ENCODE measurements at regions of chr9 and their contacts with region 1.

Region 1: DNA sequence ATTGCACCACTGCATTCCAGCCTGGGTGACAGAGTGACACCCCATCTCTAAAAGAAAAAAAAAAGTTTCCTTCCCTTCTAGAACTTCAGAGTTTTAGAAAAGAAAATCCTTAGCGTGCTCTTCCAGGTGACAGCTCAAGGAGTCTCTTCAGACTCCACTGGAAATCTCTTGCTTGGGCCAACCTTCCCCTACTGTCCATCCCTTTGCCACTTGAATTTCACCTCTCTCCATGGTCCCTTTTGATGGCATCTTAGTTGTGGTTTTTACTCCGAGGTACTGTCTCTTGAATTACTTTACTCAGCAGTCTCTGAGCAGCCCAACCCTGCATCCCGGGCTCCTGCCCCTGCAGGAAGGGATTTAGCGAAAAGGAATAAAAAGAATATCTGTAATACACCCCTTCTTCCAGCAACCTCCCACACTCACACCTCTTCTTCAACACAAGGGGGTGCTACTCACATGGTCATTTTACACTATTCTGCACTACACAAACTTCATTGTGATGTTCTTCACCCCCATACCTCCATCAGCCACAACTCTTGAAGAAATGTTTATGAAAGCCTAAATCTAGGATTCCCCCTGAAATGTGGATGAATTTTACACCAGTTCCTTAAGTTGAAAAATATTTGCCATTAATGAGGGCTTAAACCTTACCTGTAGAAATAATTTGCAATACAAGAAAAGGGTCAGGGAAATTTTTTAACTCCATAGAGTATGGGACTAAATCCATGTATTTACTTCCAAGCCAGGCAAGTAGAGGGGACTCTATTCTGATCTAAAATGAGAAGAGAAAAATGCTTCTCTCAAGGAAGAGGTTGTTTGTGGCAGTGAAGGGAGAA is 25.9 kb downstream of the TPD52L3 start:
- DNase-seq: no peak
- H3K4me3 ChIP-seq: no peak overlapping the region
- H3K27ac ChIP-seq: no peak overlapping the region
- H3K4me1 ChIP-seq: no peaks in the 10 kb centered on the region
- H3K27me3 ChIP-seq: no peaks in the 10 kb centered on the region
- CTCF ChIP-seq: peak; percentile 52 to 75 (median 63)

Region 2: GRCh38 chr9:6383551-6384225 is 29.6 kb after region 1 on chr9:
- intact Hi-C with region 1: loop called (anchors 2 kb)
- DNase-seq: peak in 1 of 2 donors; percentile 65
- H3K4me3 ChIP-seq: no peak overlapping the region
- H3K27ac ChIP-seq: peak overlapping the region; percentile 73 to 74
- H3K4me1 ChIP-seq: peaks cover 4 to 5% of the 10 kb centered on the region in 2 donors
- H3K27me3 ChIP-seq: no peaks in the 10 kb centered on the region
- CTCF ChIP-seq: no peak

Region 3: GRCh38 chr9:6405371-6405770 is 51.3 kb after region 1 on chr9:
- intact Hi-C with region 1: no loop called
- DNase-seq: no peak
- H3K4me3 ChIP-seq: no peak overlapping the region
- H3K27ac ChIP-seq: no peak overlapping the region
- H3K4me1 ChIP-seq: no peaks in the 10 kb centered on the region
- H3K27me3 ChIP-seq: no peaks in the 10 kb centered on the region
- CTCF ChIP-seq: no peak

Region 4: GRCh38 chr9:6498982-6499381 is 144.9 kb after region 1 on chr9:
- intact Hi-C with region 1: loop called (anchors 10 kb)
- DNase-seq: no peak
- H3K4me3 ChIP-seq: no peak overlapping the region
- H3K27ac ChIP-seq: no peak overlapping the region
- H3K4me1 ChIP-seq: no peaks in the 10 kb centered on the region
- H3K27me3 ChIP-seq: no peaks in the 10 kb centered on the region
- CTCF ChIP-seq: no peak

Region 5: DNA sequence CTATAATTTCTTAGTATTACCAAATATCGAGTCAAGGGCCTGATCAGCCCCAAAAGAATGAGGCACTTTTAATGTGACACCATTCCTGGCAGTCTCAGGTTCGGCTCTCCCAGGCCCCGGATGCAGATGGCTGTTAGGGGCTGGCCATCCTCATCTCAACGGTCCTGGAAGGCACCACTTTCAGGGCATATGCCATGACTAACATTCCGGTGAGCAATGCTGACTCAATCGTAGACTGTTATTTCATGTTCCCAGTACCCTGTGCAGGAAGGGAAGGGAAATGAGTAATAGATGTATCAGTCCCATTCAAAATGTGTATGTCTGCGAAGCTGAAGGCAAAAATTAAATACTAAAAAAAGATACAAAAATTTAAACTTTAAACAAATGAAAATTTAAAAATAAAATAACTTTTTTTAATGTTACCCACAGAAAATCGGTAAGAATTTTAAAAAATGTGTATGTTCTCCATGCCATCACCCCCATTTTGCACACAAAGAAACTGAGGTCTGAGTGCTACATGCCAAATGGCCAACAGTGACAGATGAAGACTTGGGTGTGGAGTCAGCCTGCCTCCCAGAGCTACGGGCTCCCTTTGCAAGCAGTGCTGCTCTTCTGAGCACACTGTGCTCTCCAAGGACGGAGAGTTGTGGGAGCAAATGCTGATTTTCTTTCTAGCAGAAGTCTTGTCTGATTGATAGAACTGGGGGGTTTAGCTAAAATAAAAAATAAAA is 212.5 kb after region 1 on chr9:
- intact Hi-C with region 1: loop called (anchors 1 kb)
- DNase-seq: peak; percentile 40 to 88
- H3K4me3 ChIP-seq: peak overlapping the region in 1 of 2 donors; percentile 27
- H3K27ac ChIP-seq: peak overlapping the region; percentile 72 to 84
- H3K4me1 ChIP-seq: peaks cover 0 to 14% of the 10 kb centered on the region in 2 donors
- H3K27me3 ChIP-seq: no peaks in the 10 kb centered on the region
- CTCF ChIP-seq: no peak

Region 6: GRCh38 chr9:6667633-6668280 is 313.7 kb after region 1 on chr9:
- intact Hi-C with region 1: loop called (anchors 5 kb)
- DNase-seq: no peak
- H3K4me3 ChIP-seq: no peak overlapping the region
- H3K27ac ChIP-seq: no peak overlapping the region
- H3K4me1 ChIP-seq: no peaks in the 10 kb centered on the region
- H3K27me3 ChIP-seq: no peaks in the 10 kb centered on the region
- CTCF ChIP-seq: peak in 2 of 3 experiments; percentile 21 to 49

Region 7: GRCh38 chr9:6681147-6681956 is 327.3 kb after region 1 on chr9:
- intact Hi-C with region 1: loop called (anchors 5 kb)
- DNase-seq: peak; percentile 90 to 98
- H3K4me3 ChIP-seq: peak overlapping the region; percentile 71 to 72
- H3K27ac ChIP-seq: peak overlapping the region; percentile 95 to 96
- H3K4me1 ChIP-seq: peaks cover 0 to 10% of the 10 kb centered on the region in 2 donors
- H3K27me3 ChIP-seq: no peaks in the 10 kb centered on the region
- CTCF ChIP-seq: peak in 1 of 3 experiments; percentile 6